Activated B cell treated with CpG ODN at 0.5 μM for 24 hours (primary cell): ENCODE measurements at regions of chr1 and their contacts with region 1.

Region 1: DNA sequence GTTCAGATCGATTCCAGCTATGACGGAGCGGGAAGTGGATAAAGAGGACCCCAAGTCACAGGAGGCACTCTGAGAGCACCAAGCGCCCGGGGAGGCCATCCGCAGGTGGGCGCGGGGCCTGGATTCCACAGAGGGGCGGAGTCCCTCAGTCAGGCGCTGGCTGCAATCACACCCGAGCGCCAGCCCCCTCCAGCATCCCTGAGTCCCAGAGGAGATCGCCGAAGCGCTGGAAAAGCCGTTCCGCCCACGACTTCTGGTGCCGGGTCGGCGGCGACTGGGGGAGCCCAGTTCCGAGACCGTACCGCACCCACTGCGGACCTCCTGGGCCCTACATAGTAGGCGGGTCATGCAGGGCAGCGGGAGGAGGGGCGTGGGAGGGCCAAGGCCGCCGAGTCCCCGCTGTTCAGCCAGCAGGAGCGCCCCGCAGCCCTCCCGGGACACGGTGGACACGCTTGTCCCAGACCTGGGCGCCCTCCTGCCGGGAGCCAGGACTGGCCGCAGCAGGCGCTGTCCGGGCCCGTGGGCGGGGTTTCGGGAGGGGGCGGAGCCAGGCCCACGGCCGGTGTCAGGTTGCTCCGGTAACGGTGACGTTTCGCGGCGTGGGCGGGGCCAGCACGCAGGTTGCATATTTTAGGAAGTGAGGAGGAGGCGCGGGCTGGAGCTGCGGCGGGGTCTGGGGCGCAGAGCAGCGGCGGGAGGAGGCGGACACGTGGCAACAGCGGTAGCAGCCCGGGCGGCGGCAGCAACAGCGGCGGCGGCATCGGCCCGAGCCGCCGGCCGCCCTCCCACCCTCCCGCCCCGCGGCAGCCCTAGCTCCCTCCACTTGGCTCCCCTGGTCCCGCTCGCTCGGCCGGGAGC is at the start of gene ATP1A1:
- DNase-seq: peak; percentile 99
- ATAC-seq: peak; percentile 75
- H3K4me3 Mint-ChIP-seq: peak within 1 kb of the TSS; percentile 91
- H3K27ac Mint-ChIP-seq: peak within 1 kb of the TSS; percentile 94
- H3K4me1 Mint-ChIP-seq: peaks cover 38% of the 10 kb centered on the region
- H3K27me3 Mint-ChIP-seq: peaks cover 2% of the 10 kb centered on the region
- CTCF ChIP-seq: no peak
- total RNA-seq, gene ATP1A1: 139 and 151 TPM in 2 replicates

Region 2: GRCh38 chr1:116151739-116152576 is 220.9 kb before region 1 on chr1:
- CTCF ChIA-PET with region 1: no interaction called
- POLR2A ChIA-PET with region 1: no interaction called
- intact Hi-C with region 1: loop called (anchors 2 kb)
- DNase-seq: peak; percentile 76
- ATAC-seq: peak; percentile 98
- H3K4me3 Mint-ChIP-seq: peak overlapping the region; percentile 66
- H3K27ac Mint-ChIP-seq: peak overlapping the region; percentile 19
- H3K4me1 Mint-ChIP-seq: peaks cover 3% of the 10 kb centered on the region
- H3K27me3 Mint-ChIP-seq: peaks cover 4% of the 10 kb centered on the region
- CTCF ChIP-seq: peak; percentile 38

Region 3: GRCh38 chr1:116168277-116169097 is 204.3 kb before region 1 on chr1:
- CTCF ChIA-PET with region 1: no interaction called
- POLR2A ChIA-PET with region 1: no interaction called
- intact Hi-C with region 1: loop called (anchors 5 kb)
- DNase-seq: peak; percentile 75
- ATAC-seq: peak; percentile 98
- H3K4me3 Mint-ChIP-seq: peak overlapping the region; percentile 83
- H3K27ac Mint-ChIP-seq: peak overlapping the region; percentile 41
- H3K4me1 Mint-ChIP-seq: peaks cover 11% of the 10 kb centered on the region
- H3K27me3 Mint-ChIP-seq: peaks cover 6% of the 10 kb centered on the region
- CTCF ChIP-seq: peak; percentile 91

Region 4: DNA sequence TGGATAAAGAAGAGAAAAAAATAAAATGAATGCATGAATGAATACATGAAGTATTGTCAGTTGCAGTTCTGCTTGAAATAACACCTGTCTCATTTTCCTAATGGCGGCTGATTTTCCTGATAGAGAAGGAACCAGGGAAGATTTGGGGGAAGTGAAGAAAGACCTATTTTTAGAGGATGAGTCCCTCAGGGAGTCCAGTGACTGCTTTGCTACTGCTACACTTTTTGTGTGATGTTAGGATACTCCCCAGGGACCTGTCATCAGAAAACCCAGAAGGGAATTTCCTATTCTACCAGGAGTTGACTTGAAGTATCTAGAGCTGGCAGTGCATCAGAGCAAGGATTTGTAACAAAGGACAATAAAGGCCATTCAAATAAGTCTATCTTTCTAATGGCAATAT is 146.8 kb before region 1 on chr1:
- CTCF ChIA-PET with region 1: no interaction called
- POLR2A ChIA-PET with region 1: no interaction called
- intact Hi-C with region 1: loop called (anchors 2 kb)
- DNase-seq: no peak
- ATAC-seq: peak; percentile 92
- H3K4me3 Mint-ChIP-seq: peak overlapping the region; percentile 12
- H3K27ac Mint-ChIP-seq: no peak overlapping the region
- H3K4me1 Mint-ChIP-seq: peaks cover 45% of the 10 kb centered on the region
- H3K27me3 Mint-ChIP-seq: peaks cover 2% of the 10 kb centered on the region
- CTCF ChIP-seq: no peak

Region 5: GRCh38 chr1:116310180-116310579 is 62.6 kb before region 1 on chr1:
- CTCF ChIA-PET with region 1: no interaction called
- POLR2A ChIA-PET with region 1: no interaction called
- intact Hi-C with region 1: no loop called
- DNase-seq: no peak
- ATAC-seq: no peak
- H3K4me3 Mint-ChIP-seq: no peak overlapping the region
- H3K27ac Mint-ChIP-seq: no peak overlapping the region
- H3K4me1 Mint-ChIP-seq: no peaks in the 10 kb centered on the region
- H3K27me3 Mint-ChIP-seq: peaks cover 2% of the 10 kb centered on the region
- CTCF ChIP-seq: no peak

Region 6: DNA sequence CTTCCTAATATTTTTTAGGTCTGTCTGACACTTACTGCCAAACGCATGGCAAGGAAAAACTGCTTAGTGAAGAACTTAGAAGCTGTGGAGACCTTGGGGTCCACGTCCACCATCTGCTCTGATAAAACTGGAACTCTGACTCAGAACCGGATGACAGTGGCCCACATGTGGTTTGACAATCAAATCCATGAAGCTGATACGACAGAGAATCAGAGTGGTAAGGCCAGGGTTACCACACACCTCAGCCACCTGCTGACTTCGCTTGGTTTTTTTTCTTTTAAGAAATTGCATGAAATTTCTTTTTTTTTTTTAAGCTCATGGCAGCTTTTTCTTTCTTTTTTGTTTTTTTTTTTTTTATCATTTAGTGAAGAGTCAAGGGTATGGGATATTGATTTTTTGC is 17.4 kb after region 1 on chr1:
- CTCF ChIA-PET with region 1: no interaction called
- POLR2A ChIA-PET with region 1: interaction called, 5 read pairs
- intact Hi-C with region 1: loop called (anchors 2 kb)
- DNase-seq: no peak
- ATAC-seq: peak; percentile 62
- H3K4me3 Mint-ChIP-seq: no peak overlapping the region
- H3K27ac Mint-ChIP-seq: no peak overlapping the region
- H3K4me1 Mint-ChIP-seq: peaks cover 5% of the 10 kb centered on the region
- H3K27me3 Mint-ChIP-seq: no peaks in the 10 kb centered on the region
- CTCF ChIP-seq: no peak

Region 7: GRCh38 chr1:116418091-116418830 is 45.4 kb after region 1 on chr1:
- CTCF ChIA-PET with region 1: no interaction called
- POLR2A ChIA-PET with region 1: interaction called, 9 read pairs
- intact Hi-C with region 1: loop called (anchors 1 kb)
- DNase-seq: peak; percentile 85
- ATAC-seq: peak; percentile 96
- H3K4me3 Mint-ChIP-seq: peak overlapping the region; percentile 91
- H3K27ac Mint-ChIP-seq: peak overlapping the region; percentile 87
- H3K4me1 Mint-ChIP-seq: peaks cover 26% of the 10 kb centered on the region
- H3K27me3 Mint-ChIP-seq: peaks cover 6% of the 10 kb centered on the region
- CTCF ChIP-seq: no peak

Region 8: GRCh38 chr1:116462722-116463121 is 89.9 kb after region 1 on chr1:
- CTCF ChIA-PET with region 1: no interaction called
- POLR2A ChIA-PET with region 1: no interaction called
- intact Hi-C with region 1: no loop called
- DNase-seq: no peak
- ATAC-seq: no peak
- H3K4me3 Mint-ChIP-seq: no peak overlapping the region
- H3K27ac Mint-ChIP-seq: no peak overlapping the region
- H3K4me1 Mint-ChIP-seq: no peaks in the 10 kb centered on the region
- H3K27me3 Mint-ChIP-seq: peaks cover 6% of the 10 kb centered on the region
- CTCF ChIP-seq: no peak

Region 9: DNA sequence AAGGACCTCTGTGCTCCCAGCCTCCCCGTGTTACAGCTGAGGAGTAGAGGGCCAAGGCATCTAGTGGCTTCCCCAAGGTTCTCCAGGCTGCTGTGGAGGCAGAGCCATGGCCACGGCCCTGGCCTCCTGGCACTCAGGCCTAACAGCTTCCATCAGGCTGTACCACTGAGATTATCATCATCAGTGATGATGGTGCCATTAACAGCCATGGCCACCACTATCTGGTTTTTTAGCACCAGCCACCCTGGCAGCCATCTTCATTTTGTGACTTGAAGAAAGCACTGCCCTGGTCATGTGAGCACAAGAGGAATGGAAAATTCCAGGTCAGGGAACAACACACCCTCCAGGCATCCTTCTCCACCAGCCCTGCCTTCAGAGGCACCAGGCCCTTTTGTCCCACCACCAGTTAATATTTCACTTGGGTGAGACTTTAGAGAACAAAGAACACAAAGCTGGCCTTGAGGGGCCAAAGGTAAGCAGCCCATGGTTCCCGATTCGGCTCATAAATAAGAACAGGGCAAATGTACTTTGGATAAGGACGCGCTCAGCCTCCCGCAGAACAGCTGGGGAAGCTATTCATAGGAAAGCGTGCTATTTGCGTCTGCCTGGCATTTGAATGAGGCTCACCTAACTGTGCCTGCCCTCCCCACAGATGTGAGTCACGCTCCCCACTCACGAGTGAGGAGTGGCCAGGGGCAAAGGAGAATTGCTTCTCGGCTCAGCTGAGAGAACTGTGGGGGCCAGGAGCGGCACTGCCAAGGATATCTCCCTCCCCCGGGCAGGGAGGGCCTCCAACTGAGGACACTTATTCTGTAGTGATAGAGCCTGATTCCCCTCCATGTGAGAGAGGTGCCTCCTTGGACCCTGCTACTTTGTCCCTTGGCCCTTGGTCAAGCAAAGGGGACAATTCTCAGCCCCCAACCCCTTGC is 102.4 kb after region 1 on chr1:
- CTCF ChIA-PET with region 1: no interaction called
- POLR2A ChIA-PET with region 1: no interaction called
- intact Hi-C with region 1: no loop called
- DNase-seq: no peak
- ATAC-seq: no peak
- H3K4me3 Mint-ChIP-seq: no peak overlapping the region
- H3K27ac Mint-ChIP-seq: no peak overlapping the region
- H3K4me1 Mint-ChIP-seq: no peaks in the 10 kb centered on the region
- H3K27me3 Mint-ChIP-seq: no peaks in the 10 kb centered on the region
- CTCF ChIP-seq: no peak

Region 10: DNA sequence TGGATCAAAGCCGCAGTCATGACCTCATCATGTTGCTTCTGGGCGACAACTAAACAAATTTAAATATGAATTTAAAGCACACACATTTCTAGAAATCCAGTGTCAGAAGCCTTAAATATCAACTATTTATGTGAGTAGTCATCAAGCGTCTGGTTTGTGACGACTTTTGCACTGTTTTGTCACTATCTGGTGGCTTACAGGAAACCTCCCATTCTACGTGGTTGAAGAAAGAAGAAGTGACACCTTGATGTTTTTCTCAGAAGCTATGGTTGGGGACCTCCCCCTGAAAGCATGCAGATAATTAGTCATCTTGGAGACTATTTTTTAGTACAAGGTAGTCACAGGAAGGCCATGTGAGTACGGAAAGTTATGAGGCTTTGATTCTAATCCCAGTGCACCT is 1291.5 kb after region 1 on chr1:
- CTCF ChIA-PET with region 1: no interaction called
- POLR2A ChIA-PET with region 1: no interaction called
- intact Hi-C with region 1: loop called (anchors 5 kb)
- DNase-seq: no peak
- ATAC-seq: peak; percentile 87
- H3K4me3 Mint-ChIP-seq: peak overlapping the region; percentile 44
- H3K27ac Mint-ChIP-seq: peak overlapping the region; percentile 93
- H3K4me1 Mint-ChIP-seq: peaks cover 83% of the 10 kb centered on the region
- H3K27me3 Mint-ChIP-seq: no peaks in the 10 kb centered on the region
- CTCF ChIP-seq: no peak